ENCODE measurements at regions of chr1 and their contacts with region 1.

Region 1: GRCh38 chr1:203692565-203693470 is 66.2 kb downstream of the ATP2B4 start:
- DNase-seq: peak; percentile 89
- H3K4me3 ChIP-seq: 0 out of 2 replicates have a peak overlapping the region, but pooled peaks have one; percentile 7
- H3K27ac ChIP-seq: peak overlapping the region; percentile 99
- H3K27me3 ChIP-seq: no peaks in the 10 kb centered on the region
- CTCF ChIP-seq: no peak

Region 2: GRCh38 chr1:203504397-203505250 is 188.2 kb before region 1 on chr1:
- CTCF ChIA-PET with region 1: interaction called, 185 read pairs
- POLR2A ChIA-PET with region 1: no interaction called
- DNase-seq: peak; percentile 61
- H3K4me3 ChIP-seq: no peak overlapping the region
- H3K27ac ChIP-seq: no peak overlapping the region
- H3K27me3 ChIP-seq: no peaks in the 10 kb centered on the region
- CTCF ChIP-seq: peak; percentile 81

Region 3: DNA sequence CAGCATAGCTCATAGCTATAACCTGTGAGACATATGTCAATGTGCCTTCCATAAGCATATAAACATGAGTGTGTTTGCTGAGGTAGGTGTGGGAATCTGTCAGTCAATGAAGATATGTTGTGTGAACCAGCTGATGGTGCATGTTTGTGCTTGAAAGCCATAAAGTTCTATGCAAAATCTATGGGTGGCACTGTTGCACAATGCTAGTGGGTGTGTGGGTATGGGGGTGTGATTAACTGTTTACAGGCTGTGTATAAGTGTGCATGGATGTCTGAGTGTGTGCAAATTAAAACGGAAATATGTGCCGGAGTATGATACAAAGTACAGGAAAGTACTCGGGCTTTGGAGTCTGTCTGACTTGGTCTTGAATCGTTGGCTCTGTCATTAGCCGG is 67.2 kb before region 1 on chr1:
- CTCF ChIA-PET with region 1: interaction called, 3 read pairs
- POLR2A ChIA-PET with region 1: interaction called, 10 read pairs
- DNase-seq: no peak
- H3K4me3 ChIP-seq: no peak overlapping the region
- H3K27ac ChIP-seq: no peak overlapping the region
- H3K27me3 ChIP-seq: no peaks in the 10 kb centered on the region
- CTCF ChIP-seq: no peak

Region 4: GRCh38 chr1:203673550-203674427 is 19.0 kb before region 1 on chr1:
- CTCF ChIA-PET with region 1: interaction called, 12 read pairs
- POLR2A ChIA-PET with region 1: interaction called, 12 read pairs
- DNase-seq: peak; percentile 53
- H3K4me3 ChIP-seq: peak overlapping the region; percentile 27
- H3K27ac ChIP-seq: peak overlapping the region; percentile 90
- H3K27me3 ChIP-seq: no peaks in the 10 kb centered on the region
- CTCF ChIP-seq: no peak

Region 5: DNA sequence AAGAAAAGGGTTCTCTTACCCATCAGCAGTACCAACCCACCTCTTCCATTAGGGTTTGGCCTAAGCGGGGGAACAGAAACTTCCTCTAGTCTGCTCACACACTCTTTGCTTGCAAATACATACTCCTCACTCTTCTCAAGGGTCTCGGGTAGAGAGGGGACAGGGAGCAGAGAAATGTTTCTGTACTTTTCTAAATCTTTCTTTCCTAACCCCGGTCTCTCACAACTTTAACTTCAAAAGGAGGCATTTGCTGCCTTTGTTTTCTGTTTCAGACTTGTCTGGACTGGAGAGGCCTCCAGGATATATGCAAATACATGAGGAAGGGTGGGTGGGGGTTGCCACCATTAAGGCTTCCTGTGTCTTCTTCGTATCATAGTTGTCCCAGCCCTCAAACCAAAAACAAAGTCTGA is 61.6 kb after region 1 on chr1:
- CTCF ChIA-PET with region 1: no interaction called
- POLR2A ChIA-PET with region 1: no interaction called
- DNase-seq: no peak
- H3K4me3 ChIP-seq: no peak overlapping the region
- H3K27ac ChIP-seq: no peak overlapping the region
- H3K27me3 ChIP-seq: no peaks in the 10 kb centered on the region
- CTCF ChIP-seq: no peak

Region 6: GRCh38 chr1:203823306-203823705 is 130.5 kb after region 1 on chr1:
- CTCF ChIA-PET with region 1: no interaction called
- POLR2A ChIA-PET with region 1: no interaction called
- DNase-seq: no peak
- H3K4me3 ChIP-seq: no peak overlapping the region
- H3K27ac ChIP-seq: no peak overlapping the region
- H3K27me3 ChIP-seq: no peaks in the 10 kb centered on the region
- CTCF ChIP-seq: no peak